ENCODE measurements at regions of chr4 and their contacts with region 1.

Region 1: DNA sequence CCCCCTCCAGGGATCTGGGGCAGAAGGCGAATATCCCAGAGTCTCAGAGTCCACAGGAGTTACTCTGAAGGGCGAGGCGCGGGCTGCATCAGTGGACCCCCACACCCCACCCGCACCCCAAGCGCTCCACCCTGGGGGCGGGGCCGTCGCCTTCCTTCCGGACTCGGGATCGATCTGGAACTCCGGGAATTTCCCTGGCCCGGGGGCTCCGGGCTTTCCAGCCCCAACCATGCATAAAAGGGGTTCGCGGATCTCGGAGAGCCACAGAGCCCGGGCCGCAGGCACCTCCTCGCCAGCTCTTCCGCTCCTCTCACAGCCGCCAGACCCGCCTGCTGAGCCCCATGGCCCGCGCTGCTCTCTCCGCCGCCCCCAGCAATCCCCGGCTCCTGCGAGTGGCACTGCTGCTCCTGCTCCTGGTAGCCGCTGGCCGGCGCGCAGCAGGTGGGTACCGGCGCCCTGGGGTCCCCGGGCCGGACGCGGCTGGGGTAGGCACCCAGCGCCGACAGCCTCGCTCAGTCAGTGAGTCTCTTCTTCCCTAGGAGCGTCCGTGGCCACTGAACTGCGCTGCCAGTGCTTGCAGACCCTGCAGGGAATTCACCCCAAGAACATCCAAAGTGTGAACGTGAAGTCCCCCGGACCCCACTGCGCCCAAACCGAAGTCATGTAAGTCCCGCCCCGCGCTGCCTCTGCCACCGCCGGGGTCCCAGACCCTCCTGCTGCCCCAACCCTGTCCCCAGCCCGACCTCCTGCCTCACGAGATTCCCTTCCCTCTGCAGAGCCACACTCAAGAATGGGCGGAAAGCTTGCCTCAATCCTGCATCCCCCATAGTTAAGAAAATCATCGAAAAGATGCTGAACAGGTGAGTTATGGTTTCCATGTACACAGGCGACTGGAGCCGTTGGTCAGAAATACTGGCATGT is at the start of gene CXCL1:
- DNase-seq: peak; percentile 21 to 39
- H3K4me3 ChIP-seq: peak within 1 kb of the TSS; percentile 46
- H3K4me3 Mint-ChIP-seq: peak within 1 kb of the TSS; percentile 91
- H3K27ac Mint-ChIP-seq: peak within 1 kb of the TSS; percentile 61
- H3K4me1 ChIP-seq: no peaks in the 10 kb centered on the region; the same call in 1 of the 2 replicates
- H3K4me1 Mint-ChIP-seq: no peaks in the 10 kb centered on the region
- H3K27me3 ChIP-seq: no peaks in the 10 kb centered on the region
- H3K27me3 Mint-ChIP-seq: peaks cover 7% of the 10 kb centered on the region
- CTCF ChIP-seq: no peak
- total RNA-seq, gene CXCL1: 0.79 TPM in 1 of 2 replicates, not detected in the other

Region 2: DNA sequence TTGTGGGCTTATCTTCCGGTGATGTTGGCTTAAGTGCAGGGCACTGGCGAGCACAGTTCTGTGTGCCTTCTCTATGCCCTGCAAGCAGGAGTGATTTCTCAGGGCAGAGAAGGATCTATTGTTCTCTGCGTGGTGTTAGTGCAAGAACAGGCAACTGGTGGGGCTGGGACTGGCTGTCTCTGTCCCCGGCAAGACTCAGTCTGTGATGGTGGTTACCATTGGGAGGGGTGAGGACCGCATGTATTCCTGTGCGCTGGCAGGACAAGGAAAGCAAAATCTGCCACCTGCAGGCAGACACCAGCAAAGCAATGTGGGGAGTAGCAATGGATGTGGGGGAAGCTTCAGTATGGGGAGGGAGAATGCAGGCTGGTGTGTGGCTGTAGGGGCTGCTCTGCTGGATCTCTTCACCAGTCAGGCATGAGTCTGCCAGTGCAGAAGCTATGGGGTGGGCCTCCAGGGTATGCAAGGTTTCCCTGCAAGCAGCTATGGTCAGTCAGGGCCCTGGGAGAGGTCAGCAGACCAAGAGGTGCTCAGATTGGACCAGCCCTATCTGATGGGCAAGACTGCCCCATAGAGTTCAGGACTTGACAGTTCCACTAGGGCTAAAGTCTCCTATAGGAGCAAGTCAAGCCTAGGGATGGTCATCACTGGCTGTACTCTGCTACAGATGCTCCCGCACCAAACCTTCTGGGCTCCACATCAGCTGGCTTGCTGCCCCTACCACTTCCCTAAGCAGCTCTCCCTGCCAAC is 95.6 kb after region 1 on chr4:
- CTCF ChIA-PET with region 1: no interaction called
- POLR2A ChIA-PET with region 1: no interaction called
- intact Hi-C with region 1: loop called (anchors 2 kb)
- DNase-seq: peak in 1 of 2 experiments; percentile 25
- H3K4me3 ChIP-seq: no peak overlapping the region
- H3K4me3 Mint-ChIP-seq: no peak overlapping the region
- H3K27ac Mint-ChIP-seq: no peak overlapping the region
- H3K4me1 ChIP-seq: no peaks in the 10 kb centered on the region
- H3K4me1 Mint-ChIP-seq: no peaks in the 10 kb centered on the region
- H3K27me3 ChIP-seq: no peaks in the 10 kb centered on the region
- H3K27me3 Mint-ChIP-seq: no peaks in the 10 kb centered on the region
- CTCF ChIP-seq: peak in 1 of 2 experiments; percentile 23